ENCODE measurements at regions of chr1 and their contacts with region 1.

Region 1: DNA sequence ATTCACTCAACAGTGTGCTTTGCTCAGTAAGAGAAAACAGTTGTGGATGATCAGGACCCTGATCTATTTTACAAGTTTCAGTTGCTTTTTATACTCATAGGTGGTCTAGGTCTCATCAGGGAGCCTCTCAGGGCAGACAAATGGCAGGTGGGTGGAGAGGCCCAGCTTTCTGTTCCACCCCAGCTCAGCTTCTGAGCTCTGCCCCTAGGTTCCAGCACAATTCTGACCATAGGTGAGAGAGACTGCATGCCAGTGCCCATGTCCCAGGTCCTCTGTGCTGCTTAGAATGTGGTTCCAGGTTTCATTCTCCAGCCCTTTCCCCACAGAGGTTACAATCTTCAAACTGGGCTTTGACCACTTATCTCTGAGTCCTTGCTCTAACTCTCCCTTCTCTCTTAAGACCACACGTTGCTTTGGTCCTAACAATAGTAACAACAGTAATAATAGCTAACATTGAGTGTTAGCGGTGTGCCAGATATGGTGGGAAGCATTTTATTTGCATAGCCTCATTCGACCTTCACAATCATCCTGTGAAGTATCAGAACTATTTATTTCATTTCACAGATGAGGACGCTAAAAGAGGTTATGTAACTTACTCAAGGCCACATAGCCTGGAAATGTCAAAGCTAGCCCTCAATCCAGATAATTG is 19.6 kb upstream of the DUSP10 start:
- DNase-seq: no peak
- ATAC-seq: no peak
- H3K4me3 ChIP-seq: no peak overlapping the region
- H3K27ac ChIP-seq: no peak overlapping the region
- H3K4me1 ChIP-seq: peaks cover 15% of the 10 kb centered on the region
- H3K27me3 ChIP-seq: no peaks in the 10 kb centered on the region
- CTCF ChIP-seq: no peak

Region 2: GRCh38 chr1:222019029-222019428 is 257.6 kb after region 1 on chr1:
- intact Hi-C with region 1: loop called in 1 of 2 experiments (anchors 5 kb)
- DNase-seq: no peak
- ATAC-seq: no peak
- H3K4me3 ChIP-seq: no peak overlapping the region
- H3K27ac ChIP-seq: no peak overlapping the region
- H3K4me1 ChIP-seq: peaks cover 5% of the 10 kb centered on the region
- H3K27me3 ChIP-seq: no peaks in the 10 kb centered on the region
- CTCF ChIP-seq: no peak